CD4-positive, alpha-beta T cell (primary cell): ENCODE measurements at regions of chr11 and their contacts with region 1.

Region 1: DNA sequence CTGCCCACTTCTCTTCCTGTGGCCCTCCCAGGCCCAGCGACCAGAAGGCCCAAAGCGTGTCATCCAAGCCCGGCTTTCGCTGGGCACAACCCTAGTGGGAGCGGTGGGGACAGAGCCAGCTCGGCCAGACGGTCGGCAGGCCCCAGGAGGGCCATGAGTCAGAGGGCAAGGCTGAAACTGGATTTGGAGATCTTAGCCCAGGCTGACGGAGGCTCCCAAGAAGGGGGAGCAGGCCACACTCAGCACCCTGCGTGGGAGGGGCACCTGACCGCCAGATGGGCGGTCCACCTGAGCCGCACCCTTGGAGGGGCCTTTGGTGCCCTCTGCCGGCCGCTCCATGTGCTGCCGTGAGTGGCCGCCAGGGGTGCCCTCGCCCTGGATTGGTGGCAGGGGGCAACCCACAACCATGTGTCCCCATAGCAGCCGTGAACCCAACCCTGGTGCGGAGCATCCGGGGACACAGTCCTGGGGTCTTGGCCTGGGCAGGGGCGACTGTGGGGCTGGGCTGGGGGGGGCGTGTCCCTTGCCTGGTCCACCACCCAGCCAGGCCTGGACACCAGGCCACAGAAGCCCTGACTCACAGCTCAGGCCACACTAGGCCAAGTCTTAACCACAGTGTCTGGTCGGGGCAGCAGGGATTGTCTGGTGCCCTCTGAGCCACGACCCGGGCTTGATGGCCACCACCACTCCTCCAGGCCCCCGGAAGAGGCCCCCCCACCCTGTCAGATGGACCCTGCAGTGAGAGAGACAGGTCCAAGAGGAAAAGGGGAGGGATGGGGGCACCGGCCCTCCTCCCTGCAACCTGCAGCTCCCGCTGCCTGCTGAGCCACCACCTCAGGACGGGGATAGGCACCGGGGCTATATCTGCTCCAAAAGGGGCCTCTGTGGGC is 19.2 kb upstream of the TALDO1 start:
- DNase-seq: peak; percentile 63 to 90 (median 76)
- ATAC-seq: peak; percentile 83
- H3K4me3 ChIP-seq: no peak overlapping the region
- H3K4me3 Mint-ChIP-seq: no peak overlapping the region
- H3K27ac ChIP-seq: no peak overlapping the region
- H3K27ac Mint-ChIP-seq: no peak overlapping the region
- H3K4me1 ChIP-seq: peaks cover 36% of the 10 kb centered on the region
- H3K4me1 Mint-ChIP-seq: peaks cover 5% of the 10 kb centered on the region
- H3K27me3 ChIP-seq: no peaks in the 10 kb centered on the region
- H3K27me3 Mint-ChIP-seq: peaks cover 9% of the 10 kb centered on the region
- CTCF ChIP-seq: peak; percentile 98

Region 2: GRCh38 chr11:554824-555472 is 173.2 kb before region 1 on chr11:
- CTCF ChIA-PET with region 1: interaction called, 23 read pairs
- POLR2A ChIA-PET with region 1: interaction called, 27 read pairs
- intact Hi-C with region 1: loop called (anchors 1 to 2 kb)
- DNase-seq: peak; percentile 57 to 92 (median 77)
- ATAC-seq: peak; percentile 80
- H3K4me3 ChIP-seq: peak overlapping the region; percentile 48
- H3K4me3 Mint-ChIP-seq: peak overlapping the region; percentile 34
- H3K27ac ChIP-seq: no peak overlapping the region
- H3K27ac Mint-ChIP-seq: no peak overlapping the region
- H3K4me1 ChIP-seq: peaks cover 34% of the 10 kb centered on the region
- H3K4me1 Mint-ChIP-seq: peaks cover 4% of the 10 kb centered on the region
- H3K27me3 ChIP-seq: no peaks in the 10 kb centered on the region
- H3K27me3 Mint-ChIP-seq: no peaks in the 10 kb centered on the region
- CTCF ChIP-seq: peak; percentile 53

Region 3: GRCh38 chr11:623999-624704 is 104.0 kb before region 1 on chr11:
- CTCF ChIA-PET with region 1: no interaction called
- POLR2A ChIA-PET with region 1: no interaction called
- intact Hi-C with region 1: no loop called
- DNase-seq: peak in 1 of 14 experiments; percentile 30
- ATAC-seq: no peak
- H3K4me3 ChIP-seq: no peak overlapping the region
- H3K4me3 Mint-ChIP-seq: no peak overlapping the region
- H3K27ac ChIP-seq: no peak overlapping the region
- H3K27ac Mint-ChIP-seq: no peak overlapping the region
- H3K4me1 ChIP-seq: peaks cover 21% of the 10 kb centered on the region
- H3K4me1 Mint-ChIP-seq: peaks cover 11% of the 10 kb centered on the region
- H3K27me3 ChIP-seq: peaks cover 19 to 25% of the 10 kb centered on the region in 2 experiments
- H3K27me3 Mint-ChIP-seq: peaks cover 23% of the 10 kb centered on the region
- CTCF ChIP-seq: no peak

Region 4: DNA sequence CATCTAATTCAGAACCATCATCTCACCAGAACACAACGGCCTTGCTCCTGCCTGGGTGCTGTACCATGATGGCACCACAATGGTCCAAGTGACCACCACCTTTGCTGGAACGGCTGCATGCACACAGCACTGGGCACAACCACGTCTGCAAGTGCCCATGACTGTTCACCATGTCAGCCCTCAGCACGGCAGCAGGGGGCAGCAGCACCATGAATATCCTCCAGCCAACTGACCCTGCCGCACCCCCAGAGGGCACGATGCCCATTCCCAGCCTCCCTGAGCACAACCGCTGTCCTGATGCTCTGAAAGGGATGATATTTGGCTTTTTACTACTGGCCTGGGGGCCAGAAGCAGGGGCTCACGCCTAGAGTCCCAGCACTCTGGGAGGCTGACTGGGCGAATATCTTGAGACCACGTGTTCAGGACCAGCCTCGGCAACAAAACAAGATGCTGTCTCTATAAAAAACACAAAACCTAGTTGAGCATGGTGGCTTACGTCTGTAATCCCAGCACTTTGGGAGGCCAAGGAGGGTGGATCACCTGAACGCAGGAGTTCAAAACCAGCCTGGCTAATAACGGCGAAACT is 65.3 kb before region 1 on chr11:
- CTCF ChIA-PET with region 1: interaction called, 3 read pairs
- POLR2A ChIA-PET with region 1: no interaction called
- intact Hi-C with region 1: loop called (anchors 1 to 2 kb)
- DNase-seq: peak in 11 of 14 experiments; percentile 17 to 68 (median 32)
- ATAC-seq: peak; percentile 66
- H3K4me3 ChIP-seq: no peak overlapping the region
- H3K4me3 Mint-ChIP-seq: no peak overlapping the region
- H3K27ac ChIP-seq: no peak overlapping the region
- H3K27ac Mint-ChIP-seq: no peak overlapping the region
- H3K4me1 ChIP-seq: no peaks in the 10 kb centered on the region
- H3K4me1 Mint-ChIP-seq: no peaks in the 10 kb centered on the region
- H3K27me3 ChIP-seq: no peaks in the 10 kb centered on the region
- H3K27me3 Mint-ChIP-seq: no peaks in the 10 kb centered on the region
- CTCF ChIP-seq: peak; percentile 76

Region 5: DNA sequence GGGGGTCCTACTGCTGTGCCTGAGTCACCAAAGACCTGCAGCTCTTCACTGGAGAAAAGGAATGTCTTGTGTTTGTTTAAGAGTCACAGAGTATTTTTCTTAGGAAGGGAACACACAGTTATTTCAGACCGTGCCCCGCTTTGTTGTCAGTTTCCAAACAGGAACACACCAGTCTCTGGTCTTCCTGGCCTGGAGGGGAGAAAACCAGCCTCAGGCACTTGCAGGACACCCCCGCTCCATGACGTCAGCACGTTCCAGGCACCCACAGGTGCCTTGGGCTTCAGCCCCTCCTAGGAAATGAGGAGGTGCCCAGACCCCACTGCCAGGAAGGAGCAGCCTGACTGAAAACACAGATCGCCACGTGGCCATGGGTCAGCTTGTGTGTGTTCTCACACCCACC is 38.5 kb before region 1 on chr11:
- CTCF ChIA-PET with region 1: no interaction called
- POLR2A ChIA-PET with region 1: interaction called, 41 read pairs
- intact Hi-C with region 1: loop called (anchors 2 to 5 kb)
- DNase-seq: peak in 1 of 14 experiments; percentile 32
- ATAC-seq: no peak
- H3K4me3 ChIP-seq: no peak overlapping the region
- H3K4me3 Mint-ChIP-seq: no peak overlapping the region
- H3K27ac ChIP-seq: no peak overlapping the region
- H3K27ac Mint-ChIP-seq: peak overlapping the region; percentile 42
- H3K4me1 ChIP-seq: peaks cover 47% of the 10 kb centered on the region
- H3K4me1 Mint-ChIP-seq: peaks cover 36% of the 10 kb centered on the region
- H3K27me3 ChIP-seq: no peaks in the 10 kb centered on the region
- H3K27me3 Mint-ChIP-seq: no peaks in the 10 kb centered on the region
- CTCF ChIP-seq: no peak

Region 6: DNA sequence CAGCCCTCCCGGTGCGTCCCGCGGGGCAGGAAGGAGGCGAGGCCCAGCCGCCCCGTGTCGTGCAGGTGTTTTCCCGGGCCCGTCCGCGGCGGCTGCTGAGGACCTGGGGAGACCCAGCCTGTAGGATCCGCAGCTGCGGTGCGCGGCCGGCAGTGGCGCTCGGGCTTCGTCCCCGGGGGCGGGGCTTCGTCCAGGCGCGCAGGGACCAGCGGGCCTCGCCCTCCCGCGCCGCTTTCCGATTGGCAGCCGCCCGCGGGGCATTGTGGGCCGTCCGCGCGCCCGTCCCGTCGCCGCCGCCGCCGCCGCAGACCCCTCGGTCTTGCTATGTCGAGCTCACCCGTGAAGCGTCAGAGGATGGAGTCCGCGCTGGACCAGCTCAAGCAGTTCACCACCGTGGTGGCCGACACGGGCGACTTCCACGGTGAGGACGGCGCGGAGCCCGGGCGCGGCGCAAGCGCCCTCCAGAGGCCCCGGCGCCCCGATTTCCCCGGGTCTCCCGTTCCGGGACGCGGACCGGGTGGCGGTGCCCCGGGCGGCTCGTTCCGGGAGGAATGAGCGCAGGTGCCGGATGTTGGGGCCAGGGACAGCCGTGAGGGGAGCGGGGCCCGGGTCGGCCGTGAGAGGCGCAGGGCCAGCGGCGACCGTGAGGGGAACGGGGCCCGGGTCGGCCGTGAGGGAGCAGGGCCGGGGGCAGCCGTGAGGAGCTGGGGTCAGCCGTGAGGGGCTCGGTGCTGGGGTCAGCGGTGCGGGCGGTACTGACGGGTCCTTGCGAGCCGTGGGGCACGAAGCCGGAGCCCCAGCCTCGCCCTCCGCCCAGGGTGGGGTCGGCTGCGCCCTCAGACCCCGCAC is 19.3 kb after region 1 on chr11 and contains the start of gene TALDO1:
- CTCF ChIA-PET with region 1: interaction called, 4 read pairs
- POLR2A ChIA-PET with region 1: interaction called, 10 read pairs
- intact Hi-C with region 1: no loop called
- DNase-seq: peak; percentile 39 to 91 (median 75)
- ATAC-seq: peak; percentile 79
- H3K4me3 ChIP-seq: peak within 1 kb of the TSS; percentile 63
- H3K4me3 Mint-ChIP-seq: peak within 1 kb of the TSS; percentile 91
- H3K27ac ChIP-seq: peak within 1 kb of the TSS in 1 of 2 donors; percentile 46
- H3K27ac Mint-ChIP-seq: peak within 1 kb of the TSS; percentile 78
- H3K4me1 ChIP-seq: peaks cover 23% of the 10 kb centered on the region
- H3K4me1 Mint-ChIP-seq: peaks cover 18% of the 10 kb centered on the region
- H3K27me3 ChIP-seq: no peaks in the 10 kb centered on the region
- H3K27me3 Mint-ChIP-seq: no peaks in the 10 kb centered on the region
- CTCF ChIP-seq: peak; percentile 23
- total RNA-seq, gene TALDO1: 26.2 to 27.7 TPM

Region 7: GRCh38 chr11:765025-765801 is 37.1 kb after region 1 on chr11:
- CTCF ChIA-PET with region 1: no interaction called
- POLR2A ChIA-PET with region 1: interaction called, 4 read pairs
- intact Hi-C with region 1: loop called in 1 of 2 experiments (anchors 2 kb)
- DNase-seq: peak; percentile 55 to 83 (median 66)
- ATAC-seq: peak; percentile 95
- H3K4me3 ChIP-seq: no peak overlapping the region
- H3K4me3 Mint-ChIP-seq: no peak overlapping the region
- H3K27ac ChIP-seq: no peak overlapping the region
- H3K27ac Mint-ChIP-seq: no peak overlapping the region
- H3K4me1 ChIP-seq: peaks cover 4% of the 10 kb centered on the region
- H3K4me1 Mint-ChIP-seq: no peaks in the 10 kb centered on the region
- H3K27me3 ChIP-seq: no peaks in the 10 kb centered on the region
- H3K27me3 Mint-ChIP-seq: no peaks in the 10 kb centered on the region
- CTCF ChIP-seq: peak; percentile 66

Region 8: DNA sequence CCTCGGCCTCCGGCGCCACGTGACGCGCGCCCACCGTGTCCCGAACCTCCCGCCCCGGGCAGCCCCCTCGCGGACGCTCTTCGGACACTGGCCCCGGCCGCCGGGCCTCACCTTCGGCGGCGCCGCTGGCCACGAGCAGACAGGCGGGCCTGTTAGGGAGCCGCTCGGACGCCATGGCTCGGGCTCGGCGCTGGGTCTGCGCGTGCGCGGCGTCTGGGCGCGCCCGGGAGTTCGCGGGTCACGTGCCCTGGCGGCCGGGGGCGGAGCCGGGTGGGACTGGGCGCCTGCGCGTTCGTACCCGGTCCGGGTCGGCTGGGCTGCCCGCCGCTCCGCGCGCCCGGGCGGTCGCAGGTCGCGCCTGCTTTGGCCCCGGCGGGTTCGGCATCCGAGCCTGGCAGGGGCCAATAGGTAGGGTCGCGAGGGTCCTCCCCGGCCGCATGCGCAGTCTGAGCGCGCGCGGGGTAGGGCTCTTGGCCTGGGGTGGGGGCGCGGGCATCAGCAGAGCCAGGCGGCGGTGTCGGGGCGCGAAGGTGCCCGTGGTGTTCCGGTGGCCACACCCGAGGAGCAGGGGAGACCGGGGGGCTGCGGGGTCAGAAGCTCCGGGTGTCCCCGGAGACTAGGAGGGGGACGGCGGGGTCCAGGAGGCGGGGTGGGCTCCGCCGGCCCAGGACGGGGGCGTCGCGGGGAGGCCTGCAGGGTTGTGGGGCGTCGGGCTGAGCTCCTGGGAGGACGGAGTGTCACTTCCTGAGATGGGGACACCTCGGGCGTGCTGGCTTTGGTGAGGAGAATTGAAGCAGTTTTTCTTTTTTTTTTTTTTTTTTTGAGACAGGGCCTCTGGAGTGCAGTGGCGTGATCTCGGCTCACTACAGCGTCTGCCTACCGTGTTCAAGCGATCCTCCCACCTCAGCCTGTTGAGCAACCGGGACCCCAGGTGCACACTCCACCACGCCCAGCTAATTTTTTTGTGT is 49.5 kb after region 1 on chr11 and contains the start of gene GATD1:
- CTCF ChIA-PET with region 1: no interaction called
- POLR2A ChIA-PET with region 1: no interaction called
- intact Hi-C with region 1: no loop called
- DNase-seq: peak; percentile 85 to 96 (median 93)
- ATAC-seq: peak; percentile 87
- H3K4me3 ChIP-seq: peak within 1 kb of the TSS; percentile 67
- H3K4me3 Mint-ChIP-seq: peak within 1 kb of the TSS; percentile 90
- H3K27ac ChIP-seq: peak within 1 kb of the TSS in 1 of 2 donors; percentile 56
- H3K27ac Mint-ChIP-seq: peak within 1 kb of the TSS; percentile 77
- H3K4me1 ChIP-seq: peaks cover 48% of the 10 kb centered on the region
- H3K4me1 Mint-ChIP-seq: peaks cover 11% of the 10 kb centered on the region
- H3K27me3 ChIP-seq: no peaks in the 10 kb centered on the region
- H3K27me3 Mint-ChIP-seq: no peaks in the 10 kb centered on the region
- CTCF ChIP-seq: no peak
- total RNA-seq, gene GATD1: 14.7 to 16.1 TPM

Region 9: DNA sequence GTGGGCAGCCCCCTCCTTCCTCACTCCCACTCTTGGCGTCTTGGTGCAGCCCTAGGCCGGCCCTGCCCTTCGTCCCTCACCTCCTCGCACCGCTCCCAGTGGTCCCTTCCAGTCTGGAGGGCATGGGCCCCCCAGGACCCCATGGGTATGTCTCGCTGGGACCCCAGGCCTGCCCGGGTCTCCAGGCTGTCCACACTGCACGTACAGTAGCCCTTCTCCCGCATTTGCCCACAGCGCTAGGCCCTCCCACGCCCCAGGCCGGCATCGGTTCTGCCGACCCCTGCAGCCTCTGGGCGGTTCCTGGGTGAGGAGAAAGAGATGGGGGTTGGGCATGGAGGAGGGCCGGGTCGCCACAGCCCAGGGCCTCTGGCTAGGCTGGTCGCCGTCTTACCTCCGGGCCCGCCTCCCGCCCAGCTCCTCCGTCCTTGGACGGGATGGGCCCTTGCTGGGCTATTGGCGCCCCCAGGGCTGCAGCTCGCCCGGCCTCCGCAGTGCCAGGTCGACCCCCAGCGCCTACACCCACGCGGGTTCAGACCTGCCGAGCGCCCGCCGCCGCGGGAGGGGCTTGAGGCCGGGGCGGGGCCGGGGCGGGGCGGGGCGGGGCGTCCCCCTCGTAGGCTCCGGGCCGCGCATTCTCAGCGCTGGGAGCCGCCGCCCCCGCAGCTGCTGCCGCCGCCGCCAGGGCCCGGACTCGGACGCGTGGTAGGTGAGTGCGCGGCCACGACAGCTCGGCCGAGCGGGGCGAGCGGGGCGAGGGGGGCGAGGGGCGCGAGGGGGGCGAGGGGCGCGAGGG is 104.4 kb after region 1 on chr11 and contains the start of gene CD151:
- CTCF ChIA-PET with region 1: no interaction called
- POLR2A ChIA-PET with region 1: no interaction called
- intact Hi-C with region 1: no loop called
- DNase-seq: peak in 8 of 14 experiments; percentile 26 to 85 (median 52)
- ATAC-seq: peak; percentile 59
- H3K4me3 ChIP-seq: peak within 1 kb of the TSS; percentile 39
- H3K4me3 Mint-ChIP-seq: peak within 1 kb of the TSS; percentile 85
- H3K27ac ChIP-seq: no peak within 1 kb of the TSS
- H3K27ac Mint-ChIP-seq: no peak within 1 kb of the TSS
- H3K4me1 ChIP-seq: peaks cover 69% of the 10 kb centered on the region
- H3K4me1 Mint-ChIP-seq: peaks cover 33% of the 10 kb centered on the region
- H3K27me3 ChIP-seq: peaks cover 43 to 51% of the 10 kb centered on the region in 2 experiments
- H3K27me3 Mint-ChIP-seq: peaks cover 42% of the 10 kb centered on the region
- CTCF ChIP-seq: no peak
- total RNA-seq, gene CD151: 20.2 to 20.8 TPM